ENCODE measurements at regions of chr1 and their contacts with region 1.

Region 1: GRCh38 chr1:189708674-189709073 is 769.0 kb downstream of the BRINP3 start:
- DNase-seq: peak; percentile 3
- H3K4me3 ChIP-seq: no peak overlapping the region
- H3K27ac ChIP-seq: no peak overlapping the region
- H3K4me1 ChIP-seq: no peaks in the 10 kb centered on the region
- H3K27me3 ChIP-seq: no peaks in the 10 kb centered on the region
- CTCF ChIP-seq: peak; percentile 15 to 41

Region 2: GRCh38 chr1:190320952-190321351 is 612.3 kb after region 1 on chr1:
- CTCF ChIA-PET with region 1: no interaction called
- dilution Hi-C with region 1: no loop called
- in situ Hi-C with region 1: no loop called
- intact Hi-C with region 1: loop called (anchors 10 kb)
- DNase-seq: peak; percentile 3
- H3K4me3 ChIP-seq: no peak overlapping the region
- H3K27ac ChIP-seq: no peak overlapping the region
- H3K4me1 ChIP-seq: no peaks in the 10 kb centered on the region
- H3K27me3 ChIP-seq: no peaks in the 10 kb centered on the region
- CTCF ChIP-seq: peak; percentile 8 to 39

Region 3: GRCh38 chr1:190373705-190374336 is 665.1 kb after region 1 on chr1:
- CTCF ChIA-PET with region 1: interaction called, 3 read pairs
- dilution Hi-C with region 1: no loop called
- in situ Hi-C with region 1: no loop called
- intact Hi-C with region 1: loop called (anchors 1 kb)
- DNase-seq: peak; percentile 9
- H3K4me3 ChIP-seq: no peak overlapping the region
- H3K27ac ChIP-seq: no peak overlapping the region
- H3K4me1 ChIP-seq: no peaks in the 10 kb centered on the region
- H3K27me3 ChIP-seq: peaks cover 2% of the 10 kb centered on the region
- CTCF ChIP-seq: peak; percentile 49 to 74

Measured in mammary epithelial cell (primary cell).